AG04449 (cell line): ENCODE measurements at regions of chr12 and their contacts with region 1.

Region 1: GRCh38 chr12:57238854-57239554 is 9.5 kb downstream of the SHMT2 start:
- DNase-seq: no peak
- H3K4me3 ChIP-seq: peak overlapping the region; percentile 69
- CTCF ChIP-seq: peak; percentile 100

Region 2: GRCh38 chr12:57248934-57249742 is 10.1 kb after region 1 on chr12:
- CTCF ChIA-PET with region 1: interaction called, 425 read pairs
- POLR2A ChIA-PET with region 1: no interaction called
- DNase-seq: no peak
- H3K4me3 ChIP-seq: no peak overlapping the region
- CTCF ChIP-seq: no peak

Region 3: DNA sequence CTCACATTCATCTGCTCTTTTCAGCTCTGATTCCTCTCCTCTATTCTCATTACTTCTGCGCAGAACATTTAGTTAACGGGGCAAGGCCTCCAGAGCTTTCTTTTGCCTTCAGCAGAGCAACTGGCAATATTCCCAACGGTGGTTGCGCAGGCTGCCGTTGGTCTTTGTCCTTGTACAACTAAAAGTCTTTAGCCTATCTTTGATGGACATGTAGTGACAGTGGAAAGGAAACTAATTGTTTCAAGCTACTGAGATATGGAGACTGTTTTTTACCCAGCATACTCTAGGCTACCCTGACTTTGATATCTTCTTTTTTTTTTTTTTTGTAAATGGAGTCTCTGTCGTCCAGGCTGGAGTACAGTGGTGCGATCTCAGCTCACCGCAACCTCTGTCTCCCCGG is 179.3 kb after region 1 on chr12:
- CTCF ChIA-PET with region 1: no interaction called
- POLR2A ChIA-PET with region 1: no interaction called
- DNase-seq: no peak
- H3K4me3 ChIP-seq: no peak overlapping the region
- CTCF ChIP-seq: no peak

Region 4: GRCh38 chr12:57611108-57611809 is 372.3 kb after region 1 on chr12 and contains the start of gene ARHGEF25:
- CTCF ChIA-PET with region 1: no interaction called
- POLR2A ChIA-PET with region 1: no interaction called
- DNase-seq: no peak
- H3K4me3 ChIP-seq: peak within 1 kb of the TSS; percentile 70
- CTCF ChIP-seq: no peak